ENCODE measurements at regions of chr9 and their contacts with region 1.

Region 1: GRCh38 chr9:104863180-104863883 is 64.6 kb downstream of the ABCA1 start:
- DNase-seq: peak; percentile 58
- H3K4me3 ChIP-seq: no peak overlapping the region
- H3K27ac ChIP-seq: no peak overlapping the region
- H3K4me1 ChIP-seq: peaks cover 27% of the 10 kb centered on the region
- H3K27me3 ChIP-seq: no peaks in the 10 kb centered on the region
- CTCF ChIP-seq: peak; percentile 37 to 74 (median 71)
- POLR2A ChIP-seq: no peak

Region 2: GRCh38 chr9:104817437-104817836 is 45.9 kb before region 1 on chr9:
- intact Hi-C with region 1: no loop called
- DNase-seq: no peak
- H3K4me3 ChIP-seq: no peak overlapping the region
- H3K27ac ChIP-seq: no peak overlapping the region
- H3K4me1 ChIP-seq: no peaks in the 10 kb centered on the region
- H3K27me3 ChIP-seq: no peaks in the 10 kb centered on the region
- CTCF ChIP-seq: no peak
- POLR2A ChIP-seq: no peak

Region 3: GRCh38 chr9:104927912-104928740 is 64.8 kb after region 1 on chr9 and contains the start of gene ABCA1:
- intact Hi-C with region 1: loop called (anchors 10 kb)
- DNase-seq: peak; percentile 99
- H3K4me3 ChIP-seq: peak within 1 kb of the TSS; percentile 80 to 87
- H3K27ac ChIP-seq: peak within 1 kb of the TSS; percentile 75 to 83
- H3K4me1 ChIP-seq: peaks cover 8% of the 10 kb centered on the region
- H3K27me3 ChIP-seq: no peaks in the 10 kb centered on the region
- CTCF ChIP-seq: no peak
- POLR2A ChIP-seq: no peak
- total RNA-seq, gene ABCA1: 42.0 to 57.9 TPM

Measured in testis (tissue), 5 donors.